ENCODE measurements at regions of chr6 and their contacts with region 1.

Region 1: GRCh38 chr6:41697861-41698781 is 37.3 kb downstream of the TFEB start:
- DNase-seq: peak; percentile 75
- H3K4me3 ChIP-seq: no peak overlapping the region
- H3K27ac ChIP-seq: peak overlapping the region; percentile 87
- H3K4me1 ChIP-seq: peaks cover 19% of the 10 kb centered on the region
- H3K27me3 ChIP-seq: peaks cover 0 to 2% of the 10 kb centered on the region in 2 experiments
- CTCF ChIP-seq: no peak
- POLR2A ChIP-seq: no peak

Region 2: GRCh38 chr6:41209547-41210320 is 488.4 kb before region 1 on chr6:
- CTCF ChIA-PET with region 1: no interaction called
- POLR2A ChIA-PET with region 1: no interaction called
- dilution Hi-C with region 1: no loop called
- intact Hi-C with region 1: no loop called
- DNase-seq: no peak
- H3K4me3 ChIP-seq: no peak overlapping the region
- H3K27ac ChIP-seq: no peak overlapping the region
- H3K4me1 ChIP-seq: no peaks in the 10 kb centered on the region
- H3K27me3 ChIP-seq: peaks cover 3 to 9% of the 10 kb centered on the region in 2 experiments
- CTCF ChIP-seq: no peak
- POLR2A ChIP-seq: no peak

Region 3: DNA sequence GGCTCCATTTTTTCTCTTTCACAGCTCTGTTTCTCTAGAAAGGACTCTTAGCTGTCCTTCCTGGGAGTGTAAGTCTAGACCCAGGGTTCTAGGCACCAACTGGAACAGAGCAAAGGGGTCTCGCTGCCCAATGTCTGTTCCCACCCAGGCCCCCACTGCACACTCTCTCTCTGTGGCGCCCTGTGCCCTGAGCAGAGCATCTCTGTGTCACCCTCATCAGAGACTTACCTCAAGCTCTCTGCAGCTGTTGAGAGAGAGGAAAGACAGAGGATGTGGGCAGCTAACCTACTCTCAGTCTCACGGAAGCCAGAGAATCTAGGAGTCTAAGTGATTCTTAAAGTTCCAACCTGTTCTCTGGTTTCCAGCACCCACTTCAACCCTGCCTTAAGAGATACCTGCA is 353.2 kb before region 1 on chr6:
- CTCF ChIA-PET with region 1: no interaction called
- POLR2A ChIA-PET with region 1: no interaction called
- dilution Hi-C with region 1: no loop called
- intact Hi-C with region 1: no loop called
- DNase-seq: no peak
- H3K4me3 ChIP-seq: no peak overlapping the region
- H3K27ac ChIP-seq: no peak overlapping the region
- H3K4me1 ChIP-seq: no peaks in the 10 kb centered on the region
- H3K27me3 ChIP-seq: peaks cover 0 to under 1% of the 10 kb centered on the region in 2 experiments
- CTCF ChIP-seq: no peak
- POLR2A ChIP-seq: no peak

Region 4: DNA sequence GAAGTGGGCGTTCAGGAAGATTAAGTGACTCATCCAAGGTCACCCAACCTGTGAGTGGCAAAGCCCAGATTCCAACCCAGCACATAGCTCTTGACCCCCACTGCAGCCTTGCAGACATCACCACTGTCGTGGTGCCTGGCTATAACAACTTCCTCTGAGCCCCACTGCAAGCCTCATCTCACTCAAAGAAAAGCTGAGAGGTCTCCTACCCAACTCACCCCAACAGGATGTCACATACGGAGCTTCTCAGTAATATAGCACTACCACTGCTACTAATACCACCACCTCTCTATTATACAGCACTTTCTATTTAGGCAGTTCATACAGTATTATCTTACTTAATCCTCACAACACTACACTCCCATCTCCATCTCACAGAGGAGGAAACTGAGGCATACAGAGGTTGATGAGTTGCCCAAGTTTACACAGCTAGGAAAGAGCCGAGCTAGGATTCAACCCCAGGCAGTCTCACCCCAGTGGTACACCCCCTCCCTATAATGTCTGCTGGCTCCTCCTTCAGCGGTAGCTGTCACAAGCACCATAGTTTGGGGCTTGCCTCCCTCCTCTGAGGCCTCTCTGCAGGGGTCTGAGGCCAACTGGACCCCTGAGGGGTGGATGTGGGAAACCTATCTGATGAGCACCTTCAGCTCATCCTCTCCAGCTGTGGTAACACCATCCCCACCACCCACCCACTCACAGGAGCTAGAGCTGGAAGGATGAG is 17.8 kb after region 1 on chr6:
- CTCF ChIA-PET with region 1: interaction called, 3 read pairs
- POLR2A ChIA-PET with region 1: no interaction called
- dilution Hi-C with region 1: no loop called
- intact Hi-C with region 1: loop called (anchors 1 kb)
- DNase-seq: no peak
- H3K4me3 ChIP-seq: no peak overlapping the region
- H3K27ac ChIP-seq: no peak overlapping the region
- H3K4me1 ChIP-seq: no peaks in the 10 kb centered on the region
- H3K27me3 ChIP-seq: no peaks in the 10 kb centered on the region
- CTCF ChIP-seq: no peak
- POLR2A ChIP-seq: no peak

Region 5: GRCh38 chr6:41735427-41736356 is 37.6 kb after region 1 on chr6 and contains the start of gene TFEB:
- CTCF ChIA-PET with region 1: interaction called, 6 read pairs
- POLR2A ChIA-PET with region 1: no interaction called
- dilution Hi-C with region 1: no loop called
- intact Hi-C with region 1: loop called (anchors 1 kb)
- DNase-seq: peak; percentile 87
- H3K4me3 ChIP-seq: peak within 1 kb of the TSS; percentile 9 to 70 (median 24)
- H3K27ac ChIP-seq: no peak within 1 kb of the TSS
- H3K4me1 ChIP-seq: peaks cover 15% of the 10 kb centered on the region
- H3K27me3 ChIP-seq: no peaks in the 10 kb centered on the region
- CTCF ChIP-seq: peak; percentile 95 to 99
- POLR2A ChIP-seq: no peak
- total RNA-seq, gene TFEB: 4.9 and 5.5 TPM in 2 replicates

Measured in endothelial cell of umbilical vein (primary cell).